Caki2 (cell line): ENCODE measurements at regions of chr2 and their contacts with region 1.

Region 1: GRCh38 chr2:27086090-27086723 is 365 bp upstream of the KHK start:
- DNase-seq: peak; percentile 90

Region 2: DNA sequence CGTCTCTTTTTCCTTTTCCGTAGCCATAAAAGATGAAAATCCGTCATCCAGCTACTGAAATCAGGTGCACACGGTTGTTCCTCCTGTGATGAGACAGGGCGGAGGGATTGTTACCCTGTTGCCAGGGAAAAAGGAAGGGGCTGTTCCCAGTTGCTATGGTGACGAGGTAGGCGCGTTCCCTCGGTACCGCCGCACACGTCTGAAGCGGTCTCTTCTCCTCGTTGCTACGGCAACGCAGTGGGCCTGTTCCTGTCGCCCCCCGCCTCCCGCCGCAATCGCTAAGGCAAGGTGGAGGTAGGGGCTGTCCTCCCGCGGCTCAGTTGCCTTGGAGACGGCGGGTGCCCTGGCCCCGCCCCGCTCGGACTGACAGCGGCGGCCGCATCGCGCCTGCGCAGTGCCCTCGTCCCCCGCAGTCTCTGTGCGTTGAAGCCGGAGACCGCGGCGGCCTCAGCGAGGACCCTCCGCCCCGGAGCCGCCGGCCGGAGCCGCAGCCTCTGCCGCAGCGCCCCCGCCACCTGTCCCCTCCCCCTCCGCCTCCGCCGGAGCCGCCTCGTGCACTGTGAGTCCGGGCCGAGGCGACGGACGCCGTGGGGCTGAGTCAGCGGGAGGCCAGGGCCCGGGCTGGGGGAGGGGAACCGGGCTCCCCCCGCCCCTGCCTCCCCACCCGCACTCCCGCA is 115.8 kb before region 1 on chr2 and contains the start of gene MAPRE3:
- in situ Hi-C with region 1: no loop called
- DNase-seq: peak; percentile 98
- total RNA-seq, gene MAPRE3: 25.9 and 33.5 TPM in 2 replicates

Region 3: DNA sequence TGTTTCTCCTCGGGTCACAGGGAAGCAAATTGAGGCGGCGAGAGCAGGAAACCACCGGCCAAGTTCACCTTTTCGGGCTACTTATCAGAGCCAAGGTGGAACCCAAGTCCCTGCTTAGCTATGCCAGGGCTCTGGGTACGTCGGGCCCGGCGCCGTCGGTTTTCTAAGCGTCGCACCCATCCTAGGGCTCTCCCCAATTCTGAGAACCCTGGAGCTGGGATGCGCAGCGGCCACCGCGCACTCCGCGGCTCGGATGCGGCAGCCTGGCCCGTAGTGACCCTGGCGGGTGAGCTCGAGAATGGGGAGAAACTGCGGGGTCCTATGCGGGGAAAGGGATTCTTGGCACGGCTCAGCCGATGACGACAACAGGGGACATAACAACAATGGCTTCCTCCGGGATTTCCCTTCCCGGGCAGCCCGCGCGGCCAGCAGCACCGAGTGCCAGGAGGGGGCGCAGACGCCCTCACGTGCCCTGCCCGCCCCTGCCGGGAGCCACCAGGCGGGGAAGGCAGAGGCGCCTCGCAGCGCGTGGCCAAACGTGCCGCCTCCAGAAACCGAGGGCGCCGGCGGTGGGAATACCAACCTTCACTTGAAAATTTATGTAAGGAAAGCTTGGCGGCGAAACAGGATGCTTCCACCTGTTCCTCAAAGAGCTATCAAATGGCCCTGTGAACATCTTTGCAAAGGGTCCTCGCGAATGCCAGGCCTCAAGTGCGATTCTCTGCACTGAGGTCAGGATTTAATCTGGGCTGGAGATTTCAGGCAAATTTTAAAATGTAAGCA is 178.7 kb after region 1 on chr2:
- in situ Hi-C with region 1: loop called (anchors 25 kb)
- DNase-seq: peak; percentile 74

Region 4: GRCh38 chr2:27441226-27441926 is 355.2 kb after region 1 on chr2:
- in situ Hi-C with region 1: no loop called
- DNase-seq: no peak

Region 5: DNA sequence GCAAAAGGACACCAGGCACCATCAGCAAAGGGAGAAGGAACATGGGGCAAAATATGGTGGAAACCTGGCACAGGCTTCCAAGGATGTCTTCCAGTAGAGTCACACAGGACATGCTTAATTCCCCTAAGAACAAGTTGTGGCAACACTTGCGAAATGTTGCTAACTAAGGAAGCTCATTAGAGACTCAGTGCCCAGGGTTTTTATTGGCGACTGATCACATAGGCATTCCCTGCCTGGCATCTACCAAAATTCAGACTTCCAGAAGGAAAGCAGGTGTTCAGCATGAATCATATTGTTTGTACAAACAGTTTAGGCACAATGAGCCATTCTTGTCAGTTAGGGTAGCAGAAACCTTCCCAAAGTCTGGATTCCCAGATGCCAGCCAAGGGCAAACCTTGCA is 603.2 kb after region 1 on chr2:
- in situ Hi-C with region 1: no loop called
- DNase-seq: no peak